Heart left ventricle (tissue), 16 donors: ENCODE measurements at regions of chr18 and their contacts with region 1.

Region 1: GRCh38 chr18:1954583-1955312 is 616.6 kb downstream of the METTL4 start:
- DNase-seq: peak in 1 of 5 donors; percentile 51
- ATAC-seq: no peak
- H3K4me3 ChIP-seq: no peak overlapping the region
- H3K27ac ChIP-seq: no peak overlapping the region
- H3K4me1 ChIP-seq: no peaks in the 10 kb centered on the region
- H3K27me3 ChIP-seq: no peaks in the 10 kb centered on the region
- CTCF ChIP-seq: no peak
- POLR2A ChIP-seq: no peak

Region 2: DNA sequence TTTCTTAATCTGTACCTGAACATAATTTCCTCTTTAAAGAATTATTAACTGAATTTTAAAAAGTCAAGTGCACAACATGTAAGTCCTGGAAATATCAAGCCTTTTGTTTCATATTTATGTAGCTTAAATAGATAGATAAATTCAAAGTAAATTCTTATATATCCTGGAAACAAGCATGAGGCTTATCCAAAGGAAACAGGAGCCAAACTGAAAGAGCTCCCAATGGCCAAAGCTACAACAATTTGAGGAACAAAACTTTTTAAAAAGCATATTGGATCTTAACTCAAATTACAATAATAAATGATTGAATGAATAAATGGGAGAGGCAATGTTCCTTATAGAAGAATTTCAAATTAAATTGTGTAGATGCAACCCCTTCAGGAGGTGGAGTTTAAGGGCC is 62.6 kb before region 1 on chr18:
- intact Hi-C with region 1: no loop called
- DNase-seq: no peak
- ATAC-seq: no peak
- H3K4me3 ChIP-seq: no peak overlapping the region
- H3K27ac ChIP-seq: no peak overlapping the region
- H3K4me1 ChIP-seq: no peaks in the 10 kb centered on the region
- H3K27me3 ChIP-seq: no peaks in the 10 kb centered on the region
- CTCF ChIP-seq: no peak
- POLR2A ChIP-seq: no peak

Region 3: GRCh38 chr18:1906420-1906819 is 48.3 kb before region 1 on chr18:
- intact Hi-C with region 1: loop called in 1 of 10 experiments (anchors 10 kb)
- DNase-seq: no peak
- ATAC-seq: no peak
- H3K4me3 ChIP-seq: no peak overlapping the region
- H3K27ac ChIP-seq: no peak overlapping the region
- H3K4me1 ChIP-seq: no peaks in the 10 kb centered on the region
- H3K27me3 ChIP-seq: no peaks in the 10 kb centered on the region
- CTCF ChIP-seq: no peak
- POLR2A ChIP-seq: no peak